ENCODE measurements at regions of chr10 and their contacts with region 1.

Region 1: DNA sequence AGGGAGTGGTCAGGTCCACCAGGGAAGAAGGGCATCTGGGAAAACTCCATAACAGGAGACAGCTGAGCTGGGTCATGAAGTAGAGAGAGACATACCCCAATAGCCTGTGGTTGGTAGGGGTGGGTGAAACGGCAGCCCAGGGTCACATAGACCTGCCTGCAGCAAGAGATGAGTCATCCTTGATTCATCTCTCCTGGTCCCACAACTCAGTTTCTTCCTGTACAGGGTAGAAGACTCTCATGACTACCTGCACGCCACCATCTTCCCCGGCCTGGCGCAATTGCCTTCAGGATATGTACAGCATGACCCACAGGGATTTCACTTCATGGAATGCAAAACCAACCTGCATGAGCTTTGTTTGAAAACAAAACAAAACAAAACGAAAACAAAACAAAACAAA is 45.1 kb upstream of the ADAM12 start:
- DNase-seq: no peak
- ATAC-seq: no peak
- H3K4me3 ChIP-seq: no peak overlapping the region
- H3K27ac ChIP-seq: no peak overlapping the region
- H3K4me1 ChIP-seq: no peaks in the 10 kb centered on the region
- H3K27me3 ChIP-seq: peaks cover 0 to 2% (median 0%) of the 10 kb centered on the region in 3 donors
- CTCF ChIP-seq: no peak

Region 2: GRCh38 chr10:126277177-126277576 is 156.2 kb before region 1 on chr10:
- intact Hi-C with region 1: no loop called
- DNase-seq: no peak
- ATAC-seq: no peak
- H3K4me3 ChIP-seq: no peak overlapping the region
- H3K27ac ChIP-seq: no peak overlapping the region
- H3K4me1 ChIP-seq: no peaks in the 10 kb centered on the region
- H3K27me3 ChIP-seq: no peaks in the 10 kb centered on the region
- CTCF ChIP-seq: no peak

Region 3: GRCh38 chr10:126459878-126460481 is 26.6 kb after region 1 on chr10:
- intact Hi-C with region 1: loop called in 1 of 2 experiments (anchors 1 kb)
- DNase-seq: no peak
- ATAC-seq: no peak
- H3K4me3 ChIP-seq: no peak overlapping the region
- H3K27ac ChIP-seq: no peak overlapping the region
- H3K4me1 ChIP-seq: no peaks in the 10 kb centered on the region
- H3K27me3 ChIP-seq: no peaks in the 10 kb centered on the region
- CTCF ChIP-seq: no peak

Region 4: GRCh38 chr10:126536148-126536547 is 102.8 kb after region 1 on chr10:
- intact Hi-C with region 1: no loop called
- DNase-seq: no peak
- ATAC-seq: no peak
- H3K4me3 ChIP-seq: no peak overlapping the region
- H3K27ac ChIP-seq: no peak overlapping the region
- H3K4me1 ChIP-seq: no peaks in the 10 kb centered on the region
- H3K27me3 ChIP-seq: no peaks in the 10 kb centered on the region
- CTCF ChIP-seq: no peak